K562 (cell line): ENCODE measurements at regions of chr1 and their contacts with region 1.

Region 1: GRCh38 chr1:111679541-111679940 is 59.7 kb downstream of the INKA2 start:
- DNase-seq: no peak
- ATAC-seq: no peak
- H3K4me3 ChIP-seq: no peak overlapping the region
- H3K27ac ChIP-seq: no peak overlapping the region
- H3K4me1 ChIP-seq: no peaks in the 10 kb centered on the region
- H3K27me3 ChIP-seq: no peaks in the 10 kb centered on the region
- CTCF ChIP-seq: no peak
- EP300 ChIP-seq: no peak
- POLR2A ChIP-seq: no peak
- RAD21 ChIP-seq: no peak

Region 2: GRCh38 chr1:111603979-111604378 is 75.6 kb before region 1 on chr1:
- CTCF ChIA-PET with region 1: no interaction called
- POLR2A ChIA-PET with region 1: no interaction called
- in situ Hi-C with region 1: no loop called
- intact Hi-C with region 1: no loop called
- DNase-seq: no peak
- ATAC-seq: peak; percentile 69
- H3K4me3 ChIP-seq: no peak overlapping the region
- H3K27ac ChIP-seq: no peak overlapping the region
- H3K4me1 ChIP-seq: peaks cover 4 to 14% of the 10 kb centered on the region in 2 experiments; a peak in 4 of 5 replicates
- H3K27me3 ChIP-seq: no peaks in the 10 kb centered on the region
- CTCF ChIP-seq: no peak
- EP300 ChIP-seq: no peak
- POLR2A ChIP-seq: no peak
- RAD21 ChIP-seq: no peak

Region 3: GRCh38 chr1:111690306-111690617 is 10.7 kb after region 1 on chr1:
- CTCF ChIA-PET with region 1: no interaction called
- POLR2A ChIA-PET with region 1: interaction called, 10 read pairs
- in situ Hi-C with region 1: no loop called
- intact Hi-C with region 1: no loop called
- DNase-seq: no peak
- ATAC-seq: no peak
- H3K4me3 ChIP-seq: no peak overlapping the region
- H3K27ac ChIP-seq: no peak overlapping the region
- H3K4me1 ChIP-seq: no peaks in the 10 kb centered on the region
- H3K27me3 ChIP-seq: no peaks in the 10 kb centered on the region
- CTCF ChIP-seq: no peak
- EP300 ChIP-seq: no peak
- POLR2A ChIP-seq: no peak
- RAD21 ChIP-seq: no peak

Region 4: GRCh38 chr1:111739194-111739924 is 59.8 kb after region 1 on chr1 and contains the start of gene INKA2:
- CTCF ChIA-PET with region 1: no interaction called
- POLR2A ChIA-PET with region 1: no interaction called
- in situ Hi-C with region 1: no loop called
- intact Hi-C with region 1: no loop called
- DNase-seq: peak; percentile 91 to 99 (median 98)
- ATAC-seq: peak; percentile 90
- H3K4me3 ChIP-seq: peak within 1 kb of the TSS; percentile 44
- H3K27ac ChIP-seq: no peak within 1 kb of the TSS
- H3K4me1 ChIP-seq: peaks cover 14 to 28% of the 10 kb centered on the region in 2 experiments
- H3K27me3 ChIP-seq: peaks cover 39 to 75% of the 10 kb centered on the region in 2 experiments
- CTCF ChIP-seq: no peak
- EP300 ChIP-seq: no peak
- POLR2A ChIP-seq: no peak; the same call in 1 of the 2 replicates
- RAD21 ChIP-seq: no peak
- polyA plus RNA-seq, gene INKA2: 0.04 TPM in 1 of 2 experiments, not detected in the other